ENCODE measurements at regions of chr18 and their contacts with region 1.

Region 1: GRCh38 chr18:26693525-26693924 is 145.2 kb upstream of the KCTD1 start:
- DNase-seq: no peak
- ATAC-seq: no peak

Region 2: DNA sequence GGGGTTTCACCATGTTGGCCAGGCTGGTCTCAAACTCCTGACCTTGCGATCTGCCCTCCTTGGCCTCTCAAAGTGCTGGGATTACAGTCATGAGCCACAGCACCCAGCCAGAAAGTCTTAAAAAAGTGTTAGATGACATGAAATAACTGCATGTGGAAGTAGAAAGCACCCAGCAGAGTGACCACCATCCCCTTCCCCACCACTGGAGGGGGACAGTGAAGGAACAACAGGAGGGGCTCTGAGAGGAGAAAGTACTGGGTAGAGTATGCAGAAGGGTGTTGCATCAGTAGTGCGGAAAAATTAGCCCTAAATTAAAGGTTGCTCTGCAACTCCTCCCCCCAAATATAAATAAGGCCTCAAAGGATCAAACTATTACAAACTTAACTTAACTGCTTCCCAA is 1572.1 kb before region 1 on chr18:
- intact Hi-C with region 1: loop called (anchors 5 kb)
- DNase-seq: no peak
- ATAC-seq: no peak

Region 3: GRCh38 chr18:26710470-26711096 is 17.1 kb after region 1 on chr18:
- intact Hi-C with region 1: no loop called
- DNase-seq: no peak
- ATAC-seq: no peak

Region 4: GRCh38 chr18:27378431-27379095 is 685.0 kb after region 1 on chr18:
- intact Hi-C with region 1: no loop called
- DNase-seq: no peak
- ATAC-seq: no peak

Measured in sciatic nerve (tissue), 2 donors.